Activated CD4-positive, alpha-beta memory T cell treated with anti-CD3 and anti-CD28 coated beads, Interleukin-2, amount 10 ng/mL, durations not matched to agents 7 days and 5 days (primary cell): ENCODE measurements at regions of chr15 and their contacts with region 1.

Region 1: GRCh38 chr15:101294731-101295606 is at the start of gene SNRPA1:
- DNase-seq: peak; percentile 97
- H3K4me3 Mint-ChIP-seq: peak within 1 kb of the TSS; percentile 87
- H3K27ac Mint-ChIP-seq: peak within 1 kb of the TSS; percentile 92
- H3K4me1 Mint-ChIP-seq: peaks cover 40% of the 10 kb centered on the region
- H3K27me3 Mint-ChIP-seq: no peaks in the 10 kb centered on the region
- total RNA-seq, gene SNRPA1: 107 to 113 TPM

Region 2: DNA sequence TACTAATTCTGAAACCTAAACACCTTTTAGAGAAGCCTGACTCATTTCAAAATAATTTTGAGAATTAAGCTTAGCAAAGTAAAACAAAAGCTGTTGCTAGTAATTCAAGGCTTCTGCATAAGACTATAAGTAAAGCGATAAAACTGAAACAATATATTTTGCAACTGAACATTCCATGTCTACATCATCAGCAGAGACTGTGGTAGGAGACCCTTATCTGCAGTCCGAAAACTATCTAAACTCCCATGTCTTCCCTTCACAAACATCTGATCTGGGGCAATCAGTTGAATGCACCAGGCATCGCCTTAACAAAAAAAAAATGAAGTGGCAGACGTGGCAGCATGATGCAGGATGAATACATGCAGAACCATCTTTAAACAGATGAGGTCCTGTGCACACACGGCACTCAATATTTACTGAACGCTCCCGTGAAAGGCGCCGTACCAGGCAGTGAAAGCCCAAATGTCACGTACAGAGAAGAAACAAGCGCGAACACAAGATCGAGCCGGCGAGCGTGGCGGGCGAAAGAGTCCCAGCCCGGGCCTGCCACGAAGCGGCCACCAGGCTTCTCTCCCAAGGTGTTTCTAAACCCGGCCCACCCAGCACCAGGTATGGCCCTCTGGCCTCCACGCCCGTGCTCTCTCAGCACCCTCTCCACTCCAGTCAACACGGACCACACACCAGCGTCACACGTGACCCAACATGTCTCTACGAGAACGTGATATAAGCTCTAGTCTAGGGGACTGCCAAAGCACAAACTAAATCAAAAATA is 106.1 kb before region 1 on chr15:
- CTCF ChIA-PET with region 1: no interaction called
- POLR2A ChIA-PET with region 1: no interaction called
- DNase-seq: no peak
- H3K4me3 Mint-ChIP-seq: peak overlapping the region; percentile 43
- H3K27ac Mint-ChIP-seq: peak overlapping the region; percentile 74
- H3K4me1 Mint-ChIP-seq: peaks cover 81% of the 10 kb centered on the region
- H3K27me3 Mint-ChIP-seq: no peaks in the 10 kb centered on the region

Region 3: DNA sequence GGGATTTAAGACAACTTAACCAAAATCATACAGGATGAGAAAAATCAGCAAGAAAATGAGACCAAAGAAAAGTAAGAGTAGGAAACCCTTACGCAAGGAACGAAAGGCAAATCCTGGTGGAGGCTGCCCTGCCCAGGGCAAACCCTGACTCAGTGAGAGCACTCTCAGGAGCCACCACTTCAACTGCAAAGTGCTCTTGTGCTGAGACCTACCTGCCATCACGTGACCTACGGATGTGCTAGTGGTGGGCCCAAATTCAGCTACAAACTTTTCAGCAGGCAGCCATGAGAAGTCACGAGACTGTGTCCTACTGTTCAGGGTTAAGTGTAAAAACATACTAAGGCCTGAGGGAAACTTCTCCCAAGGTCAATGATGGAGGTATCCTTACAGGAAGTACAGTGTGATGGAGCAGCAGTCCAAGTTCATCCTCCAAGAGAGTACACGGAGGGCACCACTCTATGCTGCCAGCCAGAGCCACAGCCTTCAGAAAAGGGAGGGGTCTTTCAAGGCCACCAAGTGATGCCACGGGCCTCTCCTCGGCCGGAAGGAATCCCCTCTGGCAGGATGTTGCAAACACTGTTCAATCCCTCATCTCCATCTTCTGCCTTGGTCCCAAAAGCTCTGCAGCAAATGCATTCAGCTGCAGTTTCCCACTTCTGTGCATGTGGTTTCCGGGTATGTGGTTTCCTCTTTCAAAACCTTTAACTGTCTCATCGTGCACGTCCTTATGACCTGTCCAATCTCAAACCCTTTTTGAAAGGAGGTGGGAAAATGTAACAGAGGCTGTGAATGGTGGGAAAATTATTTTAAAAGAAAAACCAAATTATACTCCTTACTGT is 52.6 kb before region 1 on chr15:
- CTCF ChIA-PET with region 1: no interaction called
- POLR2A ChIA-PET with region 1: interaction called, 13 read pairs
- DNase-seq: peak; percentile 80
- H3K4me3 Mint-ChIP-seq: peak overlapping the region; percentile 60
- H3K27ac Mint-ChIP-seq: peak overlapping the region; percentile 84
- H3K4me1 Mint-ChIP-seq: peaks cover 95% of the 10 kb centered on the region
- H3K27me3 Mint-ChIP-seq: no peaks in the 10 kb centered on the region

Region 4: GRCh38 chr15:101305820-101306255 is 10.9 kb after region 1 on chr15:
- CTCF ChIA-PET with region 1: interaction called, 5 read pairs
- POLR2A ChIA-PET with region 1: interaction called, 11 read pairs
- DNase-seq: no peak
- H3K4me3 Mint-ChIP-seq: no peak overlapping the region
- H3K27ac Mint-ChIP-seq: no peak overlapping the region
- H3K4me1 Mint-ChIP-seq: no peaks in the 10 kb centered on the region
- H3K27me3 Mint-ChIP-seq: no peaks in the 10 kb centered on the region

Region 5: GRCh38 chr15:101641166-101641764 is 346.3 kb after region 1 on chr15:
- CTCF ChIA-PET with region 1: interaction called, 48 read pairs
- POLR2A ChIA-PET with region 1: interaction called, 43 read pairs
- DNase-seq: peak; percentile 86
- H3K4me3 Mint-ChIP-seq: peak overlapping the region; percentile 36
- H3K27ac Mint-ChIP-seq: peak overlapping the region; percentile 84
- H3K4me1 Mint-ChIP-seq: peaks cover 28% of the 10 kb centered on the region
- H3K27me3 Mint-ChIP-seq: no peaks in the 10 kb centered on the region

Region 6: DNA sequence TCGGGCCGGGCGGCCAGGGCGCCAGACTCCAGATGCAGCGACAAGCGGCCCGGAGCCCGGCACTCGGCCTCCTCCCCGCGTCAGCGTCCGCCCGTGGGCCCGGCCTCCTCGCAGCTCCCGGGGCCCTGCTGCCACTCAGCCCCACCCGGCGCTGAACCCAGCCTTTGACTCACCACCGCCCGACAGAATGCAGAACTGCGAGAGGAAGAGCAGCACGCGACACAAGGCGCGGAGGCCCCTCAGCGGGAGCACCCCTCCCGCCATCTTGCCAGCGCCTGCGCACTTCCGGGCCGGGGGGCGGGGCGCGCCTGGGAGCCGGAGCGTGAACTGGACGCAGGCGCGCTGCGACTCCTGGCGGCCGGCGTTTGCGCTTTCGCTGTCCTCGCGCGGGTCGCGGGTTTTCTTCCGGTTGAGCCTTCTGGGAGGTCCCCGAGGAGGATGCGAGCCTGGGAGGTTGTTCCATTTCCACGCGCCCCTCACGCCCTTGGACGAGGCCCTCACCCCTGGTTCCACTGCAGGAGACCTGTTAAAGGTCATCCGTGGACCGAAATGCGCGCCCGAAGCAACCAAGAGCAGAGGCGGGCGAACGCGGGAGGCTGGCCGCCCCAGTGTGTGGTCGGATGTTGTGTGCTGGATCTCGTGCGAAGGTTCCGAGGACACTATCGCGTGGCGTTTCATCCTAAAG is 357.3 kb after region 1 on chr15 and contains the start of gene TM2D3:
- CTCF ChIA-PET with region 1: interaction called, 17 read pairs
- POLR2A ChIA-PET with region 1: interaction called, 46 read pairs
- DNase-seq: peak; percentile 96
- H3K4me3 Mint-ChIP-seq: peak within 1 kb of the TSS; percentile 91
- H3K27ac Mint-ChIP-seq: peak within 1 kb of the TSS; percentile 97
- H3K4me1 Mint-ChIP-seq: peaks cover 43% of the 10 kb centered on the region
- H3K27me3 Mint-ChIP-seq: no peaks in the 10 kb centered on the region
- total RNA-seq, gene TM2D3: 41.8 to 43.8 TPM